ENCODE measurements at regions of chr6 and their contacts with region 1.

Region 1: GRCh38 chr6:36759148-36759759 is 61.6 kb downstream of the RAB44 start:
- DNase-seq: peak; percentile 60 to 80 (median 75)
- H3K4me3 ChIP-seq: no peak overlapping the region
- H3K4me3 Mint-ChIP-seq: no peak overlapping the region
- H3K27ac ChIP-seq: no peak overlapping the region
- H3K27ac Mint-ChIP-seq: peak overlapping the region in 5 of 8 donors; percentile 70 to 98 (median 85)
- H3K4me1 ChIP-seq: peaks cover 41% of the 10 kb centered on the region
- H3K4me1 Mint-ChIP-seq: peaks cover 36 to 47% (median 46%) of the 10 kb centered on the region in 3 donors
- H3K27me3 ChIP-seq: no peaks in the 10 kb centered on the region
- H3K27me3 Mint-ChIP-seq: peaks cover 0 to 7% of the 10 kb centered on the region in 2 donors

Region 2: GRCh38 chr6:36615018-36615761 is 144.1 kb before region 1 on chr6:
- CTCF ChIA-PET with region 1: interaction called, 24 read pairs
- POLR2A ChIA-PET with region 1: interaction called, 3 read pairs
- DNase-seq: peak; percentile 27 to 61 (median 47)
- H3K4me3 ChIP-seq: no peak overlapping the region
- H3K4me3 Mint-ChIP-seq: no peak overlapping the region
- H3K27ac ChIP-seq: no peak overlapping the region
- H3K27ac Mint-ChIP-seq: peak overlapping the region in 7 of 8 donors; percentile 39 to 93 (median 85)
- H3K4me1 ChIP-seq: no peaks in the 10 kb centered on the region
- H3K4me1 Mint-ChIP-seq: peaks cover 14 to 28% (median 26%) of the 10 kb centered on the region in 3 donors
- H3K27me3 ChIP-seq: no peaks in the 10 kb centered on the region
- H3K27me3 Mint-ChIP-seq: no peaks in the 10 kb centered on the region

Region 3: DNA sequence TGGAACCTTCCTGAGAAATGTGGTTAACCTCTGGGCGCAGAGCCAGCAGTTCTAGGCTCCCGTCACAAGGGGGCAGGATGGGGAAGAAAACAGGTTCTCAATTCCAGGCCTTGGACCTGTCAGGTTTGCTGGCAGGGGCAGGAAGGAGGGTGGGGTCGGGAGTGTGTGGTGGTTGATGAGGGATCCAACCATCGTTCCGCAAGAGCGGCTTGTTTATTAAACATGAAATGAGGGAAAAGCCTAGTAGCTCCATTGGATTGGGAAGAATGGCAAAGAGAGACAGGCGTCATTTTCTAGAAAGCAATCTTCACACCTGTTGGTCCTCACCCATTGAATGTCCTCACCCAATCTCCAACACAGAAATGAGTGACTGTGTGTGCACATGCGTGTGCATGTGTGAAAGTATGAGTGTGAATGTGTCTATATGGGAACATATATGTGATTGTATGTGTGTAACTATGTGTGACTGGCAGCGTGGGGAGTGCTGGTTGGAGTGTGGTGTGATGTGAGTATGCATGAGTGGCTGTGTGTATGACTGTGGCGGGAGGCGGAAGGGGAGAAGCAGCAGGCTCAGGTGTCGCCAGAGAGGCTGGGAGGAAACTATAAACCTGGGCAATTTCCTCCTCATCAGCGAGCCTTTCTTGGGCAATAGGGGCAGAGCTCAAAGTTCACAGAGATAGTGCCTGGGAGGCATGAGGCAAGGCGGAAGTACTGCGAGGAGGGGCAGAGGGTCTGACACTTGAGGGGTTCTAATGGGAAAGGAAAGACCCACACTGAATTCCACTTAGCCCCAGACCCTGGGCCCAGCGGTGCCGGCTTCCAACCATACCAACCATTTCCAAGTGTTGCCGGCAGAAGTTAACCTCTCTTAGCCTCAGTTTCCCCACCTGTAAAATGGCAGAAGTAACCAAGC is 135.5 kb before region 1 on chr6:
- CTCF ChIA-PET with region 1: interaction called, 24 read pairs
- POLR2A ChIA-PET with region 1: no interaction called
- DNase-seq: peak; percentile 59 to 83 (median 65)
- H3K4me3 ChIP-seq: no peak overlapping the region
- H3K4me3 Mint-ChIP-seq: no peak overlapping the region
- H3K27ac ChIP-seq: no peak overlapping the region
- H3K27ac Mint-ChIP-seq: peak overlapping the region in 4 of 8 donors; percentile 2 to 87 (median 52)
- H3K4me1 ChIP-seq: peaks cover 7% of the 10 kb centered on the region
- H3K4me1 Mint-ChIP-seq: peaks cover 11 to 15% (median 11%) of the 10 kb centered on the region in 3 donors
- H3K27me3 ChIP-seq: no peaks in the 10 kb centered on the region
- H3K27me3 Mint-ChIP-seq: no peaks in the 10 kb centered on the region

Region 4: DNA sequence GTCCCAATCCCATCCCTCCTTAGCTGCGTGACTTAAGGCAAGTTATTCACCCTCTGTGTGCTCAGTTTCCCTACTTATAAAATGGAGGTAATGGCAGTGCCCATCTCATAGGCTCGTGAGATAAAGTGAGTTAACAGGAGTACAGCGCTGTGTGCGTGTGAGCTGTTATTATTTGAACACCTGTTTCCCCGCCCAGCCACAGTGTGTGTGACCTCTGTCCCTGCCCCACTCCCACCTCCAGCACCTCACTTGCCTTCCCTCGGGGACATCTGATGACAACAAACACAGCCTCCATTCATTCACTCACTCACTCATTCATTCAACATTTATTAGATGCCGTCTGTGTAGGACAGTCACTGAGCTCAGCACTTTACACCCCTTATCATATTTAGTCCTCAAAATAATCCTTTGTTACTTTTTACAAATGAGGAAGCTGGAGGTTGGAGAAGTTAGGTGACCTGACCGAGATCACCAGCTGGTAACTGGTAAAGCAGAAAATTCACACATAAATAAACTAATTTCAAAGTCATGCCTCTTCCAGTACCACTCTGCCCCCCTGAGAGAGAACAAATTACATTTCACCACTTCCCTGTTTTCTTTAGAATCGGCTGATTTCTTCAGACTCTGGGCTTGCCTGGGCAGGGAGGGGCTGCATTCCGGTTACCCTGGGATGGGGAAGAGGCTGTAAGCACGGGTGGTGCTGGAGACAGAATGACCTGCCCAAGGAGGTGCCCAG is 21.4 kb after region 1 on chr6:
- CTCF ChIA-PET with region 1: interaction called, 70 read pairs
- POLR2A ChIA-PET with region 1: no interaction called
- DNase-seq: no peak
- H3K4me3 ChIP-seq: no peak overlapping the region
- H3K4me3 Mint-ChIP-seq: no peak overlapping the region
- H3K27ac ChIP-seq: no peak overlapping the region
- H3K27ac Mint-ChIP-seq: peak overlapping the region in 2 of 8 donors; percentile 48 to 51
- H3K4me1 ChIP-seq: peaks cover 4% of the 10 kb centered on the region
- H3K4me1 Mint-ChIP-seq: peaks cover 4 to 8% (median 4%) of the 10 kb centered on the region in 3 donors
- H3K27me3 ChIP-seq: peaks cover 4% of the 10 kb centered on the region
- H3K27me3 Mint-ChIP-seq: peaks cover 0 to 4% of the 10 kb centered on the region in 2 donors

Region 5: GRCh38 chr6:36811390-36811789 is 52.1 kb after region 1 on chr6:
- CTCF ChIA-PET with region 1: no interaction called
- POLR2A ChIA-PET with region 1: no interaction called
- DNase-seq: no peak
- H3K4me3 ChIP-seq: no peak overlapping the region
- H3K4me3 Mint-ChIP-seq: no peak overlapping the region
- H3K27ac ChIP-seq: no peak overlapping the region
- H3K27ac Mint-ChIP-seq: no peak overlapping the region
- H3K4me1 ChIP-seq: no peaks in the 10 kb centered on the region
- H3K4me1 Mint-ChIP-seq: no peaks in the 10 kb centered on the region
- H3K27me3 ChIP-seq: no peaks in the 10 kb centered on the region
- H3K27me3 Mint-ChIP-seq: peaks cover 2 to 3% of the 10 kb centered on the region in 2 donors